PC-3 (cell line): ENCODE measurements at regions of chr3 and their contacts with region 1.

Region 1: GRCh38 chr3:122077293-122078234 is 22.4 kb downstream of the CD86 start:
- DNase-seq: no peak
- ATAC-seq: no peak; the same call in 1 of the 2 replicates
- H3K4me3 ChIP-seq: no peak overlapping the region
- H3K27ac ChIP-seq: no peak overlapping the region
- H3K4me1 ChIP-seq: peaks cover 5% of the 10 kb centered on the region
- H3K27me3 ChIP-seq: peaks cover 6% of the 10 kb centered on the region; the same call in 1 of the 2 replicates
- CTCF ChIP-seq: no peak

Region 2: DNA sequence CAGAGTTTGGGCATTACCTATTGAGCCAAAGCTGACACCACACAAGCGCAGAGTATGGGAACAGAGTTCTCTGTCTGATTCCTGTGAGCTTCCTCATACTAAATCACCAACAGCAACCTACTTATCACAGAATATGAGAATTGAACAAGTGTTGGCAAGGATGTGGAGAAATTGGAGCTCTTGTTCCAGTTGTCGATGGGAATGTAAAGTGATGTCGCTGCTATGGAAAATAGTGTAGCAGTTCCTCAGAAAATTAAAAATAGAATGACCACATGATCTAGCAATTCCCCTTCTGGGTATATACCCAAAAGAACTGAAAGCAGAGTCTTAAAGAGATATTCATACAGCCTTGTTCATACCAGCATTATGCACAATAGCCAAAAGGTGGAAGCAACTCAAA is 11.0 kb after region 1 on chr3:
- CTCF ChIA-PET with region 1: no interaction called
- POLR2A ChIA-PET with region 1: no interaction called
- intact Hi-C with region 1: loop called (anchors 1 kb)
- DNase-seq: no peak
- ATAC-seq: no peak
- H3K4me3 ChIP-seq: no peak overlapping the region
- H3K27ac ChIP-seq: no peak overlapping the region
- H3K4me1 ChIP-seq: peaks cover 5% of the 10 kb centered on the region
- H3K27me3 ChIP-seq: no peaks in the 10 kb centered on the region
- CTCF ChIP-seq: no peak